ENCODE measurements at regions of chr4 and their contacts with region 1.

Region 1: GRCh38 chr4:1726146-1726934 is 5.0 kb downstream of the TACC3 start:
- DNase-seq: peak; percentile 64 to 88 (median 84)
- H3K4me3 ChIP-seq: no peak overlapping the region
- H3K27ac ChIP-seq: no peak overlapping the region
- H3K4me1 ChIP-seq: peaks cover 2% of the 10 kb centered on the region
- H3K27me3 ChIP-seq: no peaks in the 10 kb centered on the region
- CTCF ChIP-seq: peak; percentile 77 to 80 (median 78)
- EP300 ChIP-seq: no peak
- POLR2A ChIP-seq: no peak

Region 2: DNA sequence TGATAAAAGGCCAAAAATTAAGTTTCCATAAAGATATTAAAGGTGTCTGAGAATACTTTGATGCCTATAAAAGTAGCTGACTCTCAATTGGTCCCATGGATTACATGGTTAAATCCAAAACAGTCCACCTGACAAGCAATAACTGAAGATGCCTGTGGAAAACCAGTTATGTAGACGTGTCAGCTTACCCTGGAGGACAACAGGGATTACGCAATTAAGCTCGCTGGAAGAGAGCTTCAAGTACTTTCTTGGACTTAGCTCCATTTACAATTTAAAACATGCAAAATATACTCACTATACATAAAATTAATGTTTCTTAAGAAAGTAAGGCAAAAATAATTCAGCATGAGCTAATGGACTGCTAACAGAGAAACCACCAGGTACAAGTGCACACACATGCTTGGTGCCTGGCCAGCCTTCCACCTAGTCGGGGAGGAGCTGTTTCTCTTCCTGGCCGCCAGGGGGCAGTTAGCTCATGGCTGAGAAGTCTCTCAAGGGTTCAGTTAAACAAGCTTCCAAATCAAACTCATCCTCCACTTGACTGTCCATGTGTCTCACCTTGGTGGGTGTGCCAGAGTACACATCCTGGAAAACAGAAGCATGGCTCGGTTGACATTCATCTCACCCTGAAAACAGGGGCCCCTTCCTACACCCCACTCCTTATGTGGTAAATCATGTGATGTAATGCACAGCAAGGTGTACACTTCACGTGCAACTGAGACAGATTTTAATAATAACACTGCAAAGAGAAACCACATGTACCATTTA is 33.0 kb before region 1 on chr4:
- intact Hi-C with region 1: loop called (anchors 2 to 5 kb)
- DNase-seq: peak; percentile 55 to 76 (median 73)
- H3K4me3 ChIP-seq: no peak overlapping the region
- H3K27ac ChIP-seq: no peak overlapping the region
- H3K4me1 ChIP-seq: no peaks in the 10 kb centered on the region
- H3K27me3 ChIP-seq: no peaks in the 10 kb centered on the region
- CTCF ChIP-seq: peak; percentile 69 to 72 (median 70)
- EP300 ChIP-seq: no peak
- POLR2A ChIP-seq: no peak

Measured in ovary (tissue), 10 donors.